ENCODE measurements at regions of chr5 and their contacts with region 1.

Region 1: DNA sequence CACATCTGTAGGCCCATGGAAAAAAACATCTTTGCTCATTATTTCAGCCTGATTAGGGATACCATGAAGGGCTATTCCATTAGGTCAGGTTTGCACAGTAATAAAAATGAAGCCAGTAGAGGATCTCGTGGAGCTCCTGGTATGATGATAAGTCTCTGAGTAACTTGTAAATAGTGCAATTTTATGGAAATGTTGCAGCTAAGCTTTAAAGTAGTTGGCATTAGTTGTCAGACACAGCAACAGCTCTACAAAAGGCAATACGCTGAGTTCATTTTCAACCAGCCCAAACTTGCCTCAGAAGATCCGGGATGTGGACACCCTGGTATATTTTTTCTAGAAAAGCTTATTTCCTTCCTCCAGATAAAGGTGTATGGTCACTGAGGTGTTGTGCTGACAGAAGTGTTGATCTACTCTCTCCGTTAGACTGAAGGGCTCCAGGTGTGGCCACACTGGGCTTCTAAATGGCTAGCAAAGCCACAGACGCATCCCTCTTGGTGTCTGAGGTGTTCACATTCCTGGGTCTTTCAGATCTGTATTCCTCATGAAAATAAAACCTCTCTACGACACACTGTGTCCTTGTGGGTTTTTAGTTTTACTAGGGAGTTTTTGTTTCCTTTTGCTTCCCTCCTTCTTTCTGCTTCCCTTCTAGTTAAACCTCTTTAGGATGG is 141.6 kb downstream of the GHR start:
- DNase-seq: peak; percentile 81
- H3K4me3 ChIP-seq: peak overlapping the region in 1 of 3 experiments; percentile 7
- H3K27ac ChIP-seq: peak overlapping the region; percentile 52
- H3K4me1 ChIP-seq: peaks cover 16% of the 10 kb centered on the region
- H3K27me3 ChIP-seq: no peaks in the 10 kb centered on the region
- CTCF ChIP-seq: no peak

Region 2: GRCh38 chr5:42252294-42252693 is 312.5 kb before region 1 on chr5:
- CTCF ChIA-PET with region 1: no interaction called
- dilution Hi-C with region 1: no loop called
- in situ Hi-C with region 1: no loop called
- intact Hi-C with region 1: no loop called
- DNase-seq: no peak
- H3K4me3 ChIP-seq: no peak overlapping the region
- H3K27ac ChIP-seq: no peak overlapping the region
- H3K4me1 ChIP-seq: no peaks in the 10 kb centered on the region
- H3K27me3 ChIP-seq: peaks cover 2% of the 10 kb centered on the region
- CTCF ChIP-seq: no peak

Region 3: GRCh38 chr5:42306287-42306686 is 258.5 kb before region 1 on chr5:
- CTCF ChIA-PET with region 1: no interaction called
- dilution Hi-C with region 1: no loop called
- in situ Hi-C with region 1: no loop called
- intact Hi-C with region 1: no loop called
- DNase-seq: no peak
- H3K4me3 ChIP-seq: no peak overlapping the region
- H3K27ac ChIP-seq: no peak overlapping the region
- H3K4me1 ChIP-seq: no peaks in the 10 kb centered on the region
- H3K27me3 ChIP-seq: peaks cover 2% of the 10 kb centered on the region
- CTCF ChIP-seq: no peak

Region 4: GRCh38 chr5:42483472-42484154 is 81.2 kb before region 1 on chr5:
- CTCF ChIA-PET with region 1: no interaction called
- dilution Hi-C with region 1: no loop called
- in situ Hi-C with region 1: no loop called
- intact Hi-C with region 1: no loop called
- DNase-seq: no peak
- H3K4me3 ChIP-seq: no peak overlapping the region
- H3K27ac ChIP-seq: no peak overlapping the region
- H3K4me1 ChIP-seq: no peaks in the 10 kb centered on the region
- H3K27me3 ChIP-seq: no peaks in the 10 kb centered on the region
- CTCF ChIP-seq: no peak

Region 5: GRCh38 chr5:42507451-42508097 is 57.2 kb before region 1 on chr5:
- CTCF ChIA-PET with region 1: interaction called, 20 read pairs
- dilution Hi-C with region 1: no loop called
- in situ Hi-C with region 1: no loop called
- intact Hi-C with region 1: no loop called
- DNase-seq: no peak
- H3K4me3 ChIP-seq: no peak overlapping the region
- H3K27ac ChIP-seq: no peak overlapping the region
- H3K4me1 ChIP-seq: no peaks in the 10 kb centered on the region
- H3K27me3 ChIP-seq: no peaks in the 10 kb centered on the region
- CTCF ChIP-seq: no peak

Region 6: DNA sequence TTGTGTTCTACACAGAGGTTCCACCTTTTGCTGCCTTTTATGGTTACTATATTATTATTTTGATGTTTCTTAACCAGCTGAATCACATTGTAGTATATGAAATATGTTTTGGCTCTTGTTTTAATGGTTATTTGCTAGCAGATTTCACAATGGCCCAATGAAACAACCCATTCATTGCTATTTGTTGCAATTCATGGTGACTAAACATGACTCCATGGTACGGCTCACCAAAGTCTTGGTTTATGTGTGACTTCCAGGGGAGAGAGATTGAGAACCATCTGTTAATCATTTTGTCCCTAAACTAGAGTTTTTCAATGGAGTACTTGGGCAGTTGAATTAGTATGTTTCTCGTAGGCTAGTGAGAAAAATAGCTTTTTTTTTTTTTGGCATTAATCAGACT is 33.2 kb before region 1 on chr5:
- CTCF ChIA-PET with region 1: no interaction called
- dilution Hi-C with region 1: no loop called
- in situ Hi-C with region 1: no loop called
- intact Hi-C with region 1: loop called (anchors 2 kb)
- DNase-seq: peak; percentile 78
- H3K4me3 ChIP-seq: no peak overlapping the region
- H3K27ac ChIP-seq: no peak overlapping the region
- H3K4me1 ChIP-seq: peaks cover 4% of the 10 kb centered on the region
- H3K27me3 ChIP-seq: no peaks in the 10 kb centered on the region
- CTCF ChIP-seq: no peak

Measured in mammary epithelial cell (primary cell).